Activated T-helper 2 cell treated with anti-CD3 and anti-CD28 coated beads, Interferon-gamma antibody, Interleukin-2, Interleukin-4, amounts not matched to agents 10 μg/mL and 5 μg/mL and 100 μg/mL, durations not matched to agents 14 hours and 24 hours and 36 hours (primary cell): ENCODE measurements at regions of chr1 and their contacts with region 1.

Region 1: DNA sequence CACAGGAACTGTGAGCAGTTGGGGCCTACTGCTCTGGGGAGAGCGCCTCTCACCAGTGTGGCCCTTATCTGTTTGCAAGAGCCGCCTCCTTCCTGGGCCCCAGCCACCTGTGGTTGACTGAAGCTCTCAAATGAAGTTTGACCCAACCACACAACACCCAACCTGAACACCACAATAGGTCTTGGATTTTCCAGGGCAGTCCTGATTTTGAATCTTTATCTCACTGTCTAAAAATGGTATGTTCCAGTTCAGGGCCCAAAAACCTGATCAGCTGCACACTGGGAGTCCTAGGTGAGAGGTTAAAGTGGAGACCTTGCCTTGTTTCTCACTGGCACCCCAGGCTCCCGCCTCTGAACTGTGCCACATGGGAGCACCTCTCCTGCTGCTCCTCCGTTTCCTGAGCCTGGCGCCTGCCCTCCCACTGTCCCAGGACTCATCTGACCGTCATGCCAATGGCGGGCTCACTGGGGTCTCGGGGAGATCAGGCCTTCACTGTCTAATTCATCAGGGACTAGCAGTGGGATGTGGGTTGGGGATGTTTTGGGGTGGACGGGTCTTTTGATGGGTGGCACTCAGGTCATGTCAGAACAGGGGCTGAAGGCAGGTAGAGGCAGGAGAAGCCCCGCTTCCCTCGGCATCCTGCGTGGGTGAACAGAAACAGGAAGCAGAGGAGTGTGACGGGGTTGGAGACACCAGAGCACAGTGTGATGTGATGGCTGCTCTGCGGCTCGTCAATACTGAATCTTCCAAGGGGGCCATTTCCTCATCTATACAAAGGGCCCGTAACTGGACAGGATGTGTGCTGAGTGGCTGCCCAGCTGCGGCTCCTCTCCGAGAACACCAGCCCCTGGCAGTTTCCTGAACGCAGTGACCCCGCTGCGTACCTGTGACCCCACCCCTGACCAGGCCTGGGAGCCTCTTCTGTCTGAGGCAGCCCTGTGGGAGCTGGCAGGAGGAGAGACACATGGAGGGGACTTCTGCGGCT is 59.6 kb upstream of the ITPKB start:
- DNase-seq: peak; percentile 67
- H3K4me3 Mint-ChIP-seq: peak overlapping the region; percentile 32
- H3K27ac Mint-ChIP-seq: peak overlapping the region; percentile 77
- H3K4me1 Mint-ChIP-seq: peaks cover 33% of the 10 kb centered on the region
- H3K27me3 Mint-ChIP-seq: peaks cover 38% of the 10 kb centered on the region

Region 2: DNA sequence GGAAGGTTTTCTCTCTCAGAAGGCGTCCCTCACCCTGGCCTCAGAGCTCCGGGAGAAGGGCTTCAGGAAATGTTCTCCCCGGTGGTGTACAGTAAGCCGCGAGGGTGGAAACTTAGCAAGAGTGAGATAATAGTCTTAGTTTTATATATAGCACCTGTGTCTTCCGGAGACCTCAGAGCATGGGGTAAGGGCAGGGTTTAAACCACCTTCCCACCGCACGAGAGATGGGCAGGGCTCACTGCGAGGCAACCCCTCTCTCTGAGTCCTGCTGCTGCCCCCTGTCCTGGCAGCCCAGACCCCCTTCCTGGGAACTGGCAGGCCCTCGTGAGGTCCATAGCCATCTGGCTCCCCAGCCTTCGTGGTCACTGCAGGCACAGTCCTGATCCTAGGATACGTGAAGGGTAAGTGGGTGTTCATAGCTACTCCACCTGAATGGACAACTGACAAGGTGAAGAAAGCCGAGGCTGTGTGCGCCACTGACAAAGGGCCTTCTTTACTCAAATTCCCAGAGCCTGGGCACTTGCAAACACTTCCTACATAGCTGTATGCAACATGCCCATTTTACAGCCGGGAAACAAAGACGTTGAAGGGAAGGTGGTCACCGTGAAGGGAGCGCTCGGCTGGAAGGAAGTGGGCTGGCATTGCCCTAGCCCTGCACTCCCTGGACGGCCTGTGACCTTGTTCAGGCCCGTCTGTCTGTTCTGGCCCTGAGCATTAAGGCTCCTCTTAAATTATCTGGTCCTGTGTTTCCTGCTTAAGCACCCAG is 86.6 kb before region 1 on chr1:
- intact Hi-C with region 1: loop called (anchors 5 kb)
- DNase-seq: peak; percentile 62
- H3K4me3 Mint-ChIP-seq: peak overlapping the region; percentile 47
- H3K27ac Mint-ChIP-seq: peak overlapping the region; percentile 67
- H3K4me1 Mint-ChIP-seq: peaks cover 80% of the 10 kb centered on the region
- H3K27me3 Mint-ChIP-seq: no peaks in the 10 kb centered on the region

Region 3: DNA sequence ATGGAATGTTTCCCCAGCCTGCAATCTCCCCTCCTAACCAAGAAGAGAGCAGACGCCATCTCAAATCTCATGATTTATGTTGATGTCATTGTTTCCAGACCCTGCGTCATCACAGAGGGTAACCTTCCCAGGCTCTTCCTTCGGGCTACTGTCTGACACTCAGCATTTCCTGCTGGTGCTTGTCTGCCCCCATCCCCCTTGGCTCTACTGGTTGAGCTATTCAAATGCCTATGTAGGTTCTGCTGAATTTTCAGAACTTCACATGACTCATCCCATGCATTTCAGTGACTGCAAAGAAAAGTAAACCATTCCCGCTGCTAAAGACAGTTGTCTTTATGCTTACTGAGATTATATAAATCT is 34.8 kb before region 1 on chr1:
- intact Hi-C with region 1: loop called (anchors 5 kb)
- DNase-seq: no peak
- H3K4me3 Mint-ChIP-seq: no peak overlapping the region
- H3K27ac Mint-ChIP-seq: no peak overlapping the region
- H3K4me1 Mint-ChIP-seq: peaks cover 24% of the 10 kb centered on the region
- H3K27me3 Mint-ChIP-seq: peaks cover 5% of the 10 kb centered on the region

Region 4: DNA sequence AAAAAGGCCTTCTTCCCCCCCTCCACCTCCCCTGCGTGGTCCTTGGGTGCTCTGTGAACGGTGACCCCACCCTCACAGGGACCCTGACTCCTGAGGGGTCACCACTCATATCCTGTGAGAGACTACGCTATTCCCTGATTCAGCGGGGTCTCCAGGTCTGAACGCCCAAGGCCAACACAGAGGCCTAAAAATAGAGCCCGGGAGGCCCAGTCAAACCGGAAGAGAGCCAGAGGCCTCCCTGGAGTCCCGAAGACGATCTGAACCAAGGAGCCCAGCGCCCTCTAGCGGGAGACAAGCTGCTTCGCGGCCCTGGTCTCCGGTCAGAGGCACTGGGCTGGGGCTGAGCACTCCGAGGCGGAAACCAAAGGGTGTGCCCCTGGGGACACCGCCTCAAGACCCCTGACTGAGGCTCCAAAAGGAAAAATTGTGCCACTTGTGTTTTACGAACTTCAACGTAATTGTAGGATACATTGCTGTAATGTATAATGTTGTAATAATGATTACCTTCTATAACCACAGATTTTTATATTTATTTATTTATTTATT is 29.3 kb after region 1 on chr1:
- intact Hi-C with region 1: loop called (anchors 2 kb)
- DNase-seq: peak; percentile 90
- H3K4me3 Mint-ChIP-seq: peak overlapping the region; percentile 39
- H3K27ac Mint-ChIP-seq: peak overlapping the region; percentile 90
- H3K4me1 Mint-ChIP-seq: peaks cover 21% of the 10 kb centered on the region
- H3K27me3 Mint-ChIP-seq: peaks cover 3% of the 10 kb centered on the region